Heart left ventricle (tissue), 16 donors: ENCODE measurements at regions of chr13 and their contacts with region 1.

Region 1: DNA sequence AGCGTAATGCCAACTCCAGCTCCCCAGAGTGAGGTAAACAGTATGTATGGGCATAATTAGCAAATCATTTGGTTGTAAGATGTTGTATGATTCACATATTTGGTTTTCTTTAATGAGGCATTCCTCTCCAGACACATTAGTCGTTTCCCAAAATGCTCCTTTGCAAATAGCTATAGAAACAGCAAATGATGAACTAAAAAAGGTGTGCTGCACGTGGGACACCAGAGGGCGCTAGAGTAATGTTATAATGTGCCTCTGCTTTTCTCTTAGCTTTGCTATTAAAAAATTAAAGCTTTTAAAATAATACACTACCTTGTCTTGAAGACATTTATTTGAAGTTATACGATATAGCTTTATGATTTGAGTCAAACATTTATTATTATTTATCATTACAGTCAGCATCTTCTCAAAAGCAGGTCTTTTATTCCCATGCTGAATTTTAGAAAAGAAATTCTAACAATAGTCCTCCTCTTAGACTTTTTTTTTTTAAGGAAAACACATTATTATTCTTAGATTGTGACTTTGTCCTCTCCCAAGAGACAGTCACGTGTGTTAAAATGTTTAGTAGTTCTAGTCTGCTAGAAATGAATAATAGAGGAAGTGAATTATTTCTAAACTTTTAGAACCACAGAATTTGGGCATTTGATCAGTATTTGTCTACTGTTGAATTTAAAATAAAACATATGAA is 121.6 kb upstream of the FRY start:
- DNase-seq: peak in 4 of 5 donors; percentile 39 to 66 (median 50)
- ATAC-seq: peak; percentile 27 to 60 (median 44)
- H3K4me3 ChIP-seq: no peak overlapping the region
- H3K27ac ChIP-seq: peak overlapping the region in 9 of 12 donors; percentile 0 to 68 (median 37)
- H3K4me1 ChIP-seq: peaks cover 4 to 67% (median 37%) of the 10 kb centered on the region in 12 donors
- H3K27me3 ChIP-seq: no peaks in the 10 kb centered on the region
- CTCF ChIP-seq: peak; percentile 78 to 97 (median 92)
- POLR2A ChIP-seq: no peak

Region 2: GRCh38 chr13:32019612-32020233 is 109.7 kb after region 1 on chr13:
- intact Hi-C with region 1: loop called in 1 of 10 experiments (anchors 10 kb)
- DNase-seq: peak in 4 of 5 donors; percentile 37 to 55 (median 52)
- ATAC-seq: peak; percentile 42 to 62 (median 50)
- H3K4me3 ChIP-seq: no peak overlapping the region
- H3K27ac ChIP-seq: no peak overlapping the region
- H3K4me1 ChIP-seq: peaks cover 3 to 38% (median 19%) of the 10 kb centered on the region in 12 donors
- H3K27me3 ChIP-seq: no peaks in the 10 kb centered on the region
- CTCF ChIP-seq: peak; percentile 46 to 85 (median 71)
- POLR2A ChIP-seq: no peak

Region 3: GRCh38 chr13:32164622-32165268 is 254.7 kb after region 1 on chr13:
- intact Hi-C with region 1: loop called in 1 of 10 experiments (anchors 10 kb)
- DNase-seq: peak in 1 of 5 donors; percentile 28
- ATAC-seq: peak in 3 of 4 donors; percentile 21 to 51 (median 46)
- H3K4me3 ChIP-seq: no peak overlapping the region
- H3K27ac ChIP-seq: peak overlapping the region in 11 of 12 donors; percentile 21 to 86 (median 63)
- H3K4me1 ChIP-seq: peaks cover 0 to 83% (median 35%) of the 10 kb centered on the region in 12 donors
- H3K27me3 ChIP-seq: no peaks in the 10 kb centered on the region
- CTCF ChIP-seq: peak; percentile 20 to 61 (median 37)
- POLR2A ChIP-seq: no peak

Region 4: DNA sequence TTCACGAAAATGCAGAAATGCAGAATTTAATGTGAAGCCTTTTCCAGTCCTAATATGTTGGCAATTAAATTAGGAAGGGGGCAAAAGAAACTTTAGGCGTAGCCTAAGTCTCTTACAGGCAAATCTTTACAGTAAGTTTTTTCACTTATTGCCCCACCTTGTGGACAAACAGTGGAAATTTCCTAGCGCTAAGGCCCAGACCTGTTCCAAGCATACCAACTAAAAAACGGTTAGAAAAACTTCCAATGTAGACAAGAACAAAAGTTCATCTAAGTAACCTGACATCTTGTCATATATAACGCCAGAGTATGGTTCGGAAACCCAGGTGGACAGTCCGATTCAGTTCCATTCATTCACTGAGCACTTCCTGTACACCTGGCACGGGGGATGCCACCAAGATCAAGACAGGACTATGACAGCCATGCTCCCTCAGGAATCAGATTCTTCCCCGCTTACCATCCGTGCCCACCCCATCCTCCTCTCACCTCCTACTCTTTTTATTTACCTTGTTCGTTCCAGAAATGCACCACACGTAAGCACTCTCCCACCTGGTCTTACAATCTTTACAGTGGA is 400.2 kb after region 1 on chr13:
- intact Hi-C with region 1: loop called in 9 of 10 experiments (anchors 2 to 10 kb)
- DNase-seq: no peak
- ATAC-seq: peak; percentile 24 to 78 (median 74)
- H3K4me3 ChIP-seq: peak overlapping the region in 8 of 12 donors; percentile 2 to 41 (median 24)
- H3K27ac ChIP-seq: peak overlapping the region in 3 of 12 donors; percentile 5 to 36 (median 15)
- H3K4me1 ChIP-seq: peaks cover 0 to 18% (median 4%) of the 10 kb centered on the region in 12 donors
- H3K27me3 ChIP-seq: no peaks in the 10 kb centered on the region
- CTCF ChIP-seq: peak; percentile 69 to 87 (median 74)
- POLR2A ChIP-seq: no peak